Mammary epithelial cell (primary cell): ENCODE measurements at regions of chr14 and their contacts with region 1.

Region 1: DNA sequence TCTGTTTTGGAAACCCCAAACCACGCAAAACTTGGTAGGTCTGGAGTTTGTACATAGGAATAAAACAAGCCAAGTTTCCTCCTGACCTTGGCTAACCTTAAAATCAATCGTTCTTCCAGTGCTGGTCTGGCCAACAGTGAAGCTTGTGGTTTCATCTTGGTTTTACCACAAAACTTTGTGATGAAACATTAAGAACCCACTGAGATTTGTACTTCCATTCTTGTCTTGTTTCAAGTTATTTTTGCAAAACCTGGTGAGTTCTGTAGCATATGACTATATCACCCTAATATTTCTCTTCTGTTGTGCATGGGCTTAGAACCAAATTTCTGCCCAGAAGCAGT is 26.4 kb downstream of the SIX1 start:
- DNase-seq: no peak
- H3K4me3 ChIP-seq: no peak overlapping the region
- H3K27ac ChIP-seq: no peak overlapping the region
- H3K4me1 ChIP-seq: no peaks in the 10 kb centered on the region
- H3K27me3 ChIP-seq: no peaks in the 10 kb centered on the region
- CTCF ChIP-seq: no peak

Region 2: GRCh38 chr14:60656686-60657455 is 34.0 kb after region 1 on chr14:
- CTCF ChIA-PET with region 1: no interaction called
- dilution Hi-C with region 1: no loop called
- in situ Hi-C with region 1: no loop called
- intact Hi-C with region 1: loop called (anchors 2 kb)
- DNase-seq: peak; percentile 68
- H3K4me3 ChIP-seq: peak overlapping the region; percentile 57 to 76 (median 72)
- H3K27ac ChIP-seq: no peak overlapping the region
- H3K4me1 ChIP-seq: peaks cover 20% of the 10 kb centered on the region
- H3K27me3 ChIP-seq: peaks cover 18% of the 10 kb centered on the region
- CTCF ChIP-seq: peak in 1 of 2 donors; percentile 58

Region 3: GRCh38 chr14:61103481-61104339 is 480.8 kb after region 1 on chr14:
- CTCF ChIA-PET with region 1: no interaction called
- dilution Hi-C with region 1: no loop called
- in situ Hi-C with region 1: no loop called
- intact Hi-C with region 1: loop called (anchors 1 kb)
- DNase-seq: peak; percentile 92
- H3K4me3 ChIP-seq: no peak overlapping the region
- H3K27ac ChIP-seq: peak overlapping the region; percentile 94
- H3K4me1 ChIP-seq: peaks cover 37% of the 10 kb centered on the region
- H3K27me3 ChIP-seq: no peaks in the 10 kb centered on the region
- CTCF ChIP-seq: no peak

Region 4: DNA sequence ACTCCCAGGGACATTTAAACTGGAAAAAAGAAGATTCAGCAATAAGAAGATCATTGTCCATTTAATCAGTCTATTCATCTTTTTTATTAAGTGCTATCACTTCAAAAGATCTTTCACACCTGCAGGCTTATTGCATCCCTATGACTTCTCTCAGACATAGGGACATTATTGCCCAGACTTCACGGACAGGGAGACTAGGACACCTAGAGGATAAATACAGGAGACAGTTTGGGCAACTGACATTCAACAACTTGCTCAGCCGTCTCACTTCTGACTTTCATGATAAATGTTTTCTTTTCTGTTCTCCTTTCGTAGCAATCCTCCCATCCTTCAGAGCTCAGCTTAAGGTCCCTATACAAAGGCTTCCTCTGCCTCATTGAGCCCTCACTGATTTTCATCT is 573.9 kb after region 1 on chr14:
- CTCF ChIA-PET with region 1: no interaction called
- dilution Hi-C with region 1: no loop called
- in situ Hi-C with region 1: loop called (anchors 10 kb)
- intact Hi-C with region 1: loop called (anchors 1 kb)
- DNase-seq: peak; percentile 25
- H3K4me3 ChIP-seq: no peak overlapping the region
- H3K27ac ChIP-seq: no peak overlapping the region
- H3K4me1 ChIP-seq: no peaks in the 10 kb centered on the region
- H3K27me3 ChIP-seq: no peaks in the 10 kb centered on the region
- CTCF ChIP-seq: peak; percentile 49 to 67

Region 5: DNA sequence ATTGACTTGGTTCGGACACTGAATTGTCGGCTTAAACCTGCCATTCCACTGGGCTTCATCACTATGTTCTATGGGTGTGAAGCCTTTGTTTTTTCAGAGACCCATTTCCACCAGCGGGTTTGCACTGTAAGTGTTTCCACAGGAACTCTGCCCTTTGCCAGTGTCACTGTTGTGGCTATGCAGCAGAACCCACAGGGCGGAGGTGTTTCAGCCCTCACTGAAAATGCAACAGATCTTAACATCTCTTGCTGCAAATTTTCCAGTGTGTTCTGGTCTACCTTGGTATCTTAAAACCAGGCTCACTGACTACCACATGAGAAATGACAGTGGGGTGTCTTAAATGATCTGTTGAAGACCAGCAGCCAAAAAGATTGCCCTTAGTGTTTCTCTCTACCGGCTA is 719.6 kb after region 1 on chr14:
- CTCF ChIA-PET with region 1: no interaction called
- dilution Hi-C with region 1: no loop called
- in situ Hi-C with region 1: no loop called
- intact Hi-C with region 1: no loop called
- DNase-seq: no peak
- H3K4me3 ChIP-seq: no peak overlapping the region
- H3K27ac ChIP-seq: no peak overlapping the region
- H3K4me1 ChIP-seq: peaks cover 16% of the 10 kb centered on the region
- H3K27me3 ChIP-seq: no peaks in the 10 kb centered on the region
- CTCF ChIP-seq: no peak